IMR-90 (cell line): ENCODE measurements at regions of chr4 and their contacts with region 1.

Region 1: DNA sequence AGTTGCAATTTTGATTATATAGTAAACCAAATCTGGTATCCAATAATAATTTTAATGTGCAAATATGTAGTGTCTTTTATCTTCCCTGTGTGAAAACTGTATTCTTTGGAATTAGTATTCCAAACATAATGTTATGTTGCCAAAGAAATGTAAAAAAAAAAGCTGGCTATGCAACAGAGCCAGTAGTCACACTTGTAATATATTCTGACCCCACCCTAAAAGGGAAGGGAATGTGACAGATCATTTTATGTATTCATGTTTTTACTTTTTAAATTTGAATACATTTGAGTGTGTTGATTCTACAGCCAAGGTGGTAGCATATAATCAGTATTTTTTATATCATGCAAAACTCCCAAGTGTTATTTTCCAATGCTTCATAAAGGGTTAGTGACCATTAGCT is 27.9 kb upstream of the MCUB start:
- DNase-seq: no peak
- ATAC-seq: no peak
- H3K4me3 ChIP-seq: no peak overlapping the region
- H3K27ac ChIP-seq: no peak overlapping the region
- H3K4me1 ChIP-seq: no peaks in the 10 kb centered on the region
- H3K27me3 ChIP-seq: no peaks in the 10 kb centered on the region
- CTCF ChIP-seq: no peak
- POLR2A ChIP-seq: no peak
- RAD21 ChIP-seq: no peak

Region 2: DNA sequence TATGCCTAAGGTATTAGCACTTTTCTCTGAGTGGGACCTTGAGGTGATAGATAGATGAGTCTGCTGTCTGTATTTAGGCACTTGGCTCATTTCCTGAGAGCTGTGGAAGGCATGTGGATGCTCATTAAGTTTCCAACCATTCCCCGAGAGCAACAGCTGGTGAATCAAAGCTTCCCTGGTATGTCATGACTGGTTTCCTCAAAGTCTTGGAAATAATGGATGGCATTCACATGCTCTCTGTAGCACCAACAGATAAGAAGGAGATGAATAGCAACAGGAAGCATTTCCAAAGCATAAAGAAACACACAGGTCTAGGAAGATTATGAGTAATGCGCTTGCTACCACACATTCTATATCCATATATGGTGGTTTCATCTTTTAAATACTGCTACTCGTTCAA is 651.0 kb before region 1 on chr4:
- CTCF ChIA-PET with region 1: no interaction called
- POLR2A ChIA-PET with region 1: no interaction called
- dilution Hi-C with region 1: no loop called
- in situ Hi-C with region 1: no loop called
- intact Hi-C with region 1: no loop called
- DNase-seq: peak; percentile 96
- ATAC-seq: peak; percentile 84
- H3K4me3 ChIP-seq: no peak overlapping the region
- H3K27ac ChIP-seq: no peak overlapping the region
- H3K4me1 ChIP-seq: peaks cover 2% of the 10 kb centered on the region; the same call in 1 of the 2 replicates
- H3K27me3 ChIP-seq: no peaks in the 10 kb centered on the region
- CTCF ChIP-seq: no peak
- POLR2A ChIP-seq: no peak
- RAD21 ChIP-seq: no peak

Region 3: DNA sequence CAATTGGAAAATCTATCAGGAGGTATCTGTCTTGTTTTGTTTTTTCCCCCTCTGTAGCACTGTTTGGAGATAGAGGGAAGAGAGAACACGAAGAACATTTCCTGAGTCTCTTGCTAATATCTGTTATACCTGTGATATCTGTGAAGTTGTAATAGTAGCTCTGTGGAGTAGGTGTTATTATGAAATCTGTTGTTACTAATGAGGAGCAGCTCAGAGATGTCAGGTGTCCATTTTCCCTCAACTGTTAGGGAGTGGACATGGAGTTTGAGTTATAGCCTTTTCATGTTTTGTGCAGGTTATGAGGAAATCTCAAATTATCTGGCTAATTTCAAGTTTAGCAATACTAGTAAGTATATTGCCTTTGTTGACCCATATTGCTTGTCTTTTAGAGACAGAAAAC is 46.2 kb before region 1 on chr4:
- CTCF ChIA-PET with region 1: no interaction called
- POLR2A ChIA-PET with region 1: no interaction called
- dilution Hi-C with region 1: no loop called
- in situ Hi-C with region 1: no loop called
- intact Hi-C with region 1: loop called (anchors 5 kb)
- DNase-seq: no peak
- ATAC-seq: no peak
- H3K4me3 ChIP-seq: no peak overlapping the region
- H3K27ac ChIP-seq: no peak overlapping the region
- H3K4me1 ChIP-seq: peaks cover 2% of the 10 kb centered on the region
- H3K27me3 ChIP-seq: no peaks in the 10 kb centered on the region
- CTCF ChIP-seq: no peak
- POLR2A ChIP-seq: no peak
- RAD21 ChIP-seq: no peak

Region 4: GRCh38 chr4:109820563-109820962 is 288.4 kb after region 1 on chr4:
- CTCF ChIA-PET with region 1: no interaction called
- POLR2A ChIA-PET with region 1: no interaction called
- dilution Hi-C with region 1: no loop called
- in situ Hi-C with region 1: no loop called
- intact Hi-C with region 1: loop called (anchors 5 kb)
- DNase-seq: no peak
- ATAC-seq: no peak
- H3K4me3 ChIP-seq: no peak overlapping the region
- H3K27ac ChIP-seq: no peak overlapping the region
- H3K4me1 ChIP-seq: 0 out of 2 replicates have a peak, but pooled peaks cover 1% of the 10 kb centered on the region
- H3K27me3 ChIP-seq: no peaks in the 10 kb centered on the region
- CTCF ChIP-seq: no peak
- POLR2A ChIP-seq: no peak
- RAD21 ChIP-seq: no peak